Dorsolateral prefrontal cortex (tissue), 120 donors: ENCODE measurements at regions of chr16 and their contacts with region 1.

Region 1: GRCh38 chr16:11797166-11797956 is at the start of gene ZC3H7A:
- DNase-seq: peak; percentile 88 to 98 (median 96)
- H3K4me3 ChIP-seq: peak within 1 kb of the TSS; percentile 55 to 98 (median 92)
- H3K27ac ChIP-seq: peak within 1 kb of the TSS; percentile 78 to 99 (median 94)
- H3K27me3 ChIP-seq: no peaks in the 10 kb centered on the region
- CTCF ChIP-seq: peak; percentile 50 to 94 (median 74)
- total RNA-seq, gene ZC3H7A: 40.0 to 83.3 (median 56.8) TPM

Region 2: DNA sequence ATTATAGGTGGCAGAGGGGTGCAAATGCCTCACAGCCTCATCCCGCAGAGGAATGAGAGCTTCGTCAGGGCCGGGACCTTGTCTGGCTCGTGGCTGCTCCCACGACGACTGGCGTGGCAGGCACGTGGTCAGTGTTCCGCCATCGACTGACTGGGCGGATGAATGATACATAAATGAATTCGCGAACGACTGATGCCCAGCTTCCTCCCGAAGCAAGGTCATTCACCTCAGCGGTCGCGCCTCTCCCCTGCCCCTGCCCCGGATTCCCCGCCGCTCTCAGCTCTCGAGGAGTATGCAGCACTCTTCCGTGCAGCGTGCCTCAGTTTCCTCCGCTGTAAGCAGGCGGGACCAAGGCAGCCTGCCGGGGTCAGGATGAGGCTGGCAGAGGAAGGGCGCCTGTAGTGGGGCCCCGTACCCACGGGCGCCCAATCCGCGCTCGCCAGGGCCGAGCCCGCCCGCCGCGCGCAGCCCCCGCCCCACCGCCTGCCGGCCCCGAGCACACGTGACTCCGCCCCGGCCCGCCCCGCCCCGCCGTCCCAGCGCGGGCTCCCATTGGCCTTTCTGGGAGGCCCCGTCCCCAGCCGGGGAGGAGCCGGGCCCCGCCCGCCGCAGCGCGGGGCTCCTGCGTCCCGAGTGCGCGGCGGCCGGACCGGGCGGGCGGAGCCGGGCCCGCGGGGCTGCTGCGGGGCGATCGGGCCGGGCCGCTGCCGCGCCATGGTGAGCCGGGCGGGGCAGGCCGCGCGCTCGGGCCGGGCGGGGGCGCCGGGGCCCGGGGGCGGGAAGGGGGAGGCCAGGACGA is 129.3 kb before region 1 on chr16 and contains the start of gene SNN:
- intact Hi-C with region 1: loop called (anchors 5 kb)
- DNase-seq: peak; percentile 67 to 92 (median 86)
- H3K4me3 ChIP-seq: peak within 1 kb of the TSS; percentile 49 to 95 (median 86)
- H3K27ac ChIP-seq: peak within 1 kb of the TSS in 57 of 59 donors; percentile 14 to 94 (median 82)
- H3K27me3 ChIP-seq: no peaks in the 10 kb centered on the region
- CTCF ChIP-seq: peak in 2 of 56 donors; percentile 12 to 13
- total RNA-seq, gene SNN: 90.3 to 278 (median 166) TPM

Region 3: GRCh38 chr16:11742539-11743307 is 54.6 kb before region 1 on chr16 and contains the start of gene TXNDC11:
- intact Hi-C with region 1: loop called (anchors 1 kb)
- DNase-seq: peak; percentile 98 to 100 (median 98)
- H3K4me3 ChIP-seq: peak within 1 kb of the TSS; percentile 62 to 98 (median 92)
- H3K27ac ChIP-seq: peak within 1 kb of the TSS; percentile 35 to 97 (median 93)
- H3K27me3 ChIP-seq: no peaks in the 10 kb centered on the region
- CTCF ChIP-seq: peak in 22 of 56 donors; percentile 6 to 53 (median 24)
- total RNA-seq, gene TXNDC11: 16.0 to 38.5 (median 26.0) TPM

Region 4: DNA sequence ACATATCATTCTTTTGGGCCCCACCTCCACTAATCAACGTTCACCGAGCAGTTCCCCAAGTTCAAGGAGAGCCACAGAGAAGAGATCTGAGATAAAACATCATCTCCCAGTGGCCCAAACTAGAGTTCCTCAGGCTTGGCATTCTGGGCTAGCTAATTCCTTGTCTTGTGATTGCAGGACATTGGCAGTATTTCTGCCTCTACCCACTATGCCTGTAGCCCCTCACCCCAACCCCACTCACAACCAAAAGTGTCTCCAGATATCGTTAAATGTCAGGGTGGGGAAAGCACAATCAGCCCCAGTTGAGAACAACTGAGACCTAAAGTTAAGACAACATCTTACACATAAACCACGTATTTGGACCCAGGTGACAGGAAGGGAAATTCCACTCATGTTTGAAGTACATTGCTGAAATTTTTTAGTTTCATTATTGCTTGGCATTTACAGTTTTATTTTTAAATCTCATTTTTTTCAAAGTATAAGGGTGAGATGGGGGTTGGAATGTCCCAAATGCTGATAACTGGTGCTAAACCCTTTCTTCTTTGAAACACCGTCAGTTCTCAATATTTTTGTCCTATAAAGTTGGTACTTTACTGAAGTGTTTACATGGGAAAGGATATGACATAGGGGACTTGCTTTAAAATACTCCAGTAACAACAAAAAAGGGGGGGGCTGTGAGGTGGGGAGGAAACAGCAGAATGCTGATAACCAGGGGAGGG is 13.9 kb before region 1 on chr16:
- intact Hi-C with region 1: loop called in 1 of 2 experiments (anchors 1 kb)
- DNase-seq: no peak
- H3K4me3 ChIP-seq: peak overlapping the region in 20 of 59 donors; percentile 0 to 38 (median 18)
- H3K27ac ChIP-seq: peak overlapping the region in 56 of 59 donors; percentile 16 to 87 (median 72)
- H3K27me3 ChIP-seq: no peaks in the 10 kb centered on the region
- CTCF ChIP-seq: no peak